Activated CD4-positive, alpha-beta T cell treated with anti-CD3 and anti-CD28 coated beads for 36 hours (primary cell): ENCODE measurements at regions of chr20 and their contacts with region 1.

Region 1: GRCh38 chr20:31861346-31862156 is 8.8 kb downstream of the DUSP15 start:
- DNase-seq: peak; percentile 84
- ATAC-seq: peak; percentile 97
- H3K4me3 Mint-ChIP-seq: peak overlapping the region; percentile 24
- H3K27ac Mint-ChIP-seq: no peak overlapping the region
- H3K4me1 Mint-ChIP-seq: peaks cover 8% of the 10 kb centered on the region
- H3K27me3 Mint-ChIP-seq: peaks cover 26% of the 10 kb centered on the region

Region 2: DNA sequence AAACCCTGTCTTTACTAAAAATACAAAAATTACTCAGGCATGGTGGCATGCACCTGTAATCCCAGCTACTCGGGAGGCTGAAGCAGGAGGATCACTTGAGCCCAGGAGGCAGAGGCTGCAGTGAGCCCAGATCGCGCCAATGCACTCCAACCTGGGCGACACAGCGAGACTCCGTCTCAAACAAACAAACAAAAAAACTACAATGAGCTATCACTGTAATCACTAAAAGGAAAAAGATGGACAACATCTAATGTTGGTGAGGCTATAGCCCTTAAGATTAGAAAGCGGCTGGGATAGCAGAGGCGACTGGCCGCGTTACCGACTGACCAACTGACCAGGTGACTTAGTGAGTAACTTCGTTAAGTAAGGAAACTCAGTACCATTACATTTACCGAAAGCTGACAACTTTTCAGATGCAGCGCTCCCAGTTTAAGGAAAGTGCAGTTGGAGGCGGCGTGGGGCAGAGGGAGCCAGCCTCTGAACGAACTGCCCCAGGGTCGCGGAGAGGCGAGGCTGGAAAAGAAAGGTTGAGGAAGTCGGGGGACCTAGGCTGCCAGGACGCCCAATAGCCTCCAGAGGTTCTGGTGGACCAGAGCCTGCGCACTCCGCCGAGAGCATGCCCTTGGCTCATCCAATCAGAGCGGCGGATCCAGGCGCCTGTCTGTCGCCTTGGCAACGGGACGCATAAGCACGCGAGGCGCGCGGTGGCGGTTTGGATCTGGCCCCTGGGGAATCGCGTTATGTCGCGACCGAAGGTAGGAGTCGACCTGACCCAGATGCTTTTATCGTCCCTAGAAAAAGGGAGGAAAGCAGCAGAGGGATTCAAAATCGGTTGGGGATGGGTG is 17.8 kb after region 1 on chr20:
- CTCF ChIA-PET with region 1: interaction called, 4 read pairs
- POLR2A ChIA-PET with region 1: interaction called, 3 read pairs
- intact Hi-C with region 1: loop called in 1 of 2 experiments (anchors 1 kb)
- DNase-seq: peak; percentile 90
- ATAC-seq: peak; percentile 94
- H3K4me3 Mint-ChIP-seq: peak overlapping the region; percentile 84
- H3K27ac Mint-ChIP-seq: peak overlapping the region; percentile 45
- H3K4me1 Mint-ChIP-seq: peaks cover 8% of the 10 kb centered on the region
- H3K27me3 Mint-ChIP-seq: no peaks in the 10 kb centered on the region

Region 3: DNA sequence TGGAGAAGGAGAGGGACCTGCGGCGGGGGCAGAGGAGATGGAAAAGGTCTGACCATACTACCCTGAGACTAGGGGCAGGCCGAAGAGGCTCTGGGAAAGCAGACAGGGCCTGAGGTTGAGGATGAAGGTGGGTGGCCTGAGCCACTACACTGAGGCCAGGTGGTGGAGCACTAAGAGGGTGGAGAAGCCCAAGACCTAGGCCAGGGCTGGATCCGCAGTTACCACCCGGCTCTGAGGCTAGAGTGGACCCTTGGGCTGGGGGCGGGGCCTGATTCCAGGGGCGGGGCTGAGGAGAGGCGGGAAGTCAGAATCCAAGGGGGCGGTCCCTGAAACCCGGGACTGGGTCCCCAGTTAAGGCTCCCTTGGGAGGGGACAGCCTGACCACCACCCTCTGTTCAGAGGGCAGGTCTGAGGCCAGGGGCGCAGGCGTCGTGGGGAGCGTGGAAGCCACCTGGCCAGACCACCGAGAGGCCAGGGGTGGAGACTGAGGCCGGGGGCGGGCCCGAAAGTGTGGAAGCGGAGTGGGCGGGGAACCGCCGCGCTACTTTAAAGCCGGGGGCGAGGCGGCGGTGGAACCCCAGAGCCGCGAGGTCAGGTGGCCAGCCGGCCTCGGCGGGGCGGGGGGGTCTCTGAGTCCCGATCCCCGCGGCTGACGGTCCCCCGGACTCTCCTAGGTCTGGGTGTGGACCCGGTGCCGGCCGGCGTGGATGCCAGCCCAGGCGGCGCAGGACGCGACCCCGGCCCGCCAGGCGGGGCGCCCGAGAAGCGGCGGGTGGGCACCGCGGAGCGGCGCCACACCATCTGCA is 156.9 kb after region 1 on chr20:
- CTCF ChIA-PET with region 1: no interaction called
- POLR2A ChIA-PET with region 1: no interaction called
- intact Hi-C with region 1: loop called in 1 of 2 experiments (anchors 1 kb)
- DNase-seq: peak; percentile 64
- ATAC-seq: peak; percentile 52
- H3K4me3 Mint-ChIP-seq: peak overlapping the region; percentile 60
- H3K27ac Mint-ChIP-seq: no peak overlapping the region
- H3K4me1 Mint-ChIP-seq: peaks cover 21% of the 10 kb centered on the region
- H3K27me3 Mint-ChIP-seq: peaks cover 55% of the 10 kb centered on the region